ENCODE measurements at regions of chr11 and their contacts with region 1.

Region 1: DNA sequence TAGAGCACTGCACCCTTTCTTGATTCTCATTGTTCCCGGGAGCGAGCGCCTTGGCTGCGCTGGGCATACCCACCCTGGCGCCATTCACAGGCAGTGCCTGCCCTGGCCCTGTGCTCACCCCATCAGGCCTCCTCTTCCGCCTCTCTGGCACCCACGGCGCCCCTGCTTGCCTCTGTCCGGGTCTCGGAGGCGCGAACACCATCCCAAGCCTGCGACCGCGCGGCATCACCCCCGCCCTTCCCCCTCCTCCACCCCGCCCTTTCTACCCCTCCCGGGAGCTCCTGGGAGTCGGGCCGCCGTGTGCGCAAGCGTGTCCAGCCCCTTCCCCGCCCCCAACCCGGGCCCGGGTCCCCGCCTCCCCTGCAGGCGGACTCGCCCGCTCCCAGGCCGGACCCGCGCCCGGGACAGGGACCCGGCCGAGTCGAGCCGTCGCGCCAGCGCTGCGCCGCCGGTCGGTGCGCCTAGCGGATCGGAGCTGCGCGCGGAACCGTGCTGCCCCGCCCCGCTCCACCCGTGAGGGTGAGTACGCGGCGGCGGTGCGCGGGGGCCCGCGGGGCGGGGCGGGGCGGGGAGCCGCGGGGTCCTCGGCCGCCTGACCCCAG is at the start of gene ST3GAL4:
- DNase-seq: peak; percentile 33 to 89
- H3K4me3 ChIP-seq: peak within 1 kb of the TSS; percentile 73 to 99 (median 86)
- H3K27ac ChIP-seq: peak within 1 kb of the TSS; percentile 63; the same call in 1 of the 2 replicates
- H3K4me1 ChIP-seq: peaks cover 3 to 24% (median 15%) of the 10 kb centered on the region in 4 experiments; a peak in 6 of 7 replicates
- H3K27me3 ChIP-seq: no peaks in the 10 kb centered on the region
- CTCF ChIP-seq: no peak
- EP300 ChIP-seq: no peak
- POLR2A ChIP-seq: peak in 1 of 2 experiments; percentile 58; a peak in 2 of 3 replicates
- RAD21 ChIP-seq: no peak
- total RNA-seq, gene ST3GAL4: 15.6 and 16.0 TPM in 2 replicates

Region 2: DNA sequence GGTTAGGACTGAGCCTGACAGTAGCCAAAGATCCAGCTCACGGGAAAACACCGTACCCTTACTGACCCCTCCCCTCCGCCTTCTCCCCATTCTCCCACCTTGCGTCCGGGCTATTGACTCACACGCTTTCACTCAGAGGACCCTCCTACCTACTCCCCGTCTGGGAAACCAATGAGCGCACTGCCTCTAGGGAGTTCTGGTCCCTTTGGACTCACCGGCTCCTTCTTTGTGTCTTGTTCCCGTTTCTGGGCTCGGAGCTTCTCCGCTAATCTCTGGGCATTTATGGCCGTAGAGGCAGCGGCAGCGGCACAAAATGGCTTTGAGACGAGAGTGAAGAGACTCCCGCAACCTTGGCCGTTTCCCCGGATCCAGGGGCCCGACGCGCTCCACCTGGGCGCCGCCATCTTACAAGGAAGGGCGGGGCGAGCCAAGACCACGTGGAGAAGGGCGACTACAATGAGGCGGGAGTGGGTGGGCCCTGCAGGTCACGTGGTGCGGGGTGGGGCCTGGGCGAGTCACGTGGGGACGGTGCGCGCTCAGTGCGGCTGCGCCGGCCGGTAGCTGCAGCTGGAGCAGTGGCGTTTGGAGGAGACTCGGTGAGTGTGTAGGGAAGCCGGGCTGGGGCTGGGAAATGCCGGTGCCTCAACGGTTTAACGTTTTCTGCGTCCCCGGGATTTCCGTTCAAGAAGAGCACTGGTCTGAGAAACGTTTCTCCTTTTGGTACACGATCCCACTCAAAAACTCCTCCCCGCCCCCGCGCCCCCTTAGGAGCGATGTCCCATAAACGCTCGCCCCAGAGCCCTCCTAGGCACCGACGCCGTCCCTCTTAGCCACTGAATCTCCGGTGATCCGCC is 144.0 kb before region 1 on chr11 and contains the starts of genes FAM118B and RPUSD4:
- CTCF ChIA-PET with region 1: no interaction called
- POLR2A ChIA-PET with region 1: no interaction called
- DNase-seq: peak; percentile 90 to 99
- H3K4me3 ChIP-seq: peak within 1 kb of the TSS; percentile 79 to 99 (median 94)
- H3K27ac ChIP-seq: peak within 1 kb of the TSS; percentile 82
- H3K4me1 ChIP-seq: peaks cover 0 to 11% (median 3%) of the 10 kb centered on the region in 4 experiments; a peak in 2 of 7 replicates
- H3K27me3 ChIP-seq: no peaks in the 10 kb centered on the region
- CTCF ChIP-seq: no peak
- EP300 ChIP-seq: no peak
- POLR2A ChIP-seq: peak; percentile 86 to 94
- RAD21 ChIP-seq: no peak
- total RNA-seq, gene FAM118B: 47.1 and 48.3 TPM in 2 replicates
- total RNA-seq, gene RPUSD4: 48.2 and 50.7 TPM in 2 replicates

Region 3: GRCh38 chr11:126341760-126342161 is 13.7 kb before region 1 on chr11:
- CTCF ChIA-PET with region 1: interaction called, 10 read pairs
- POLR2A ChIA-PET with region 1: interaction called, 9 read pairs
- DNase-seq: no peak
- H3K4me3 ChIP-seq: no peak overlapping the region
- H3K27ac ChIP-seq: no peak overlapping the region
- H3K4me1 ChIP-seq: peaks cover 0 to 14% (median 7%) of the 10 kb centered on the region in 4 experiments; a peak in 4 of 7 replicates
- H3K27me3 ChIP-seq: no peaks in the 10 kb centered on the region
- CTCF ChIP-seq: no peak
- EP300 ChIP-seq: no peak
- POLR2A ChIP-seq: no peak
- RAD21 ChIP-seq: no peak

Measured in H1 (cell line).